PC-9 (cell line): ENCODE measurements at regions of chr11 and their contacts with region 1.

Region 1: GRCh38 chr11:18312663-18313420 is 9.1 kb downstream of the HPS5 start:
- DNase-seq: peak; percentile 85 to 99
- H3K4me3 ChIP-seq: peak overlapping the region; percentile 9; the same call in 1 of the 2 replicates
- H3K27ac ChIP-seq: peak overlapping the region; percentile 90
- H3K4me1 ChIP-seq: peaks cover 65% of the 10 kb centered on the region
- H3K27me3 ChIP-seq: no peaks in the 10 kb centered on the region
- CTCF ChIP-seq: no peak

Region 2: DNA sequence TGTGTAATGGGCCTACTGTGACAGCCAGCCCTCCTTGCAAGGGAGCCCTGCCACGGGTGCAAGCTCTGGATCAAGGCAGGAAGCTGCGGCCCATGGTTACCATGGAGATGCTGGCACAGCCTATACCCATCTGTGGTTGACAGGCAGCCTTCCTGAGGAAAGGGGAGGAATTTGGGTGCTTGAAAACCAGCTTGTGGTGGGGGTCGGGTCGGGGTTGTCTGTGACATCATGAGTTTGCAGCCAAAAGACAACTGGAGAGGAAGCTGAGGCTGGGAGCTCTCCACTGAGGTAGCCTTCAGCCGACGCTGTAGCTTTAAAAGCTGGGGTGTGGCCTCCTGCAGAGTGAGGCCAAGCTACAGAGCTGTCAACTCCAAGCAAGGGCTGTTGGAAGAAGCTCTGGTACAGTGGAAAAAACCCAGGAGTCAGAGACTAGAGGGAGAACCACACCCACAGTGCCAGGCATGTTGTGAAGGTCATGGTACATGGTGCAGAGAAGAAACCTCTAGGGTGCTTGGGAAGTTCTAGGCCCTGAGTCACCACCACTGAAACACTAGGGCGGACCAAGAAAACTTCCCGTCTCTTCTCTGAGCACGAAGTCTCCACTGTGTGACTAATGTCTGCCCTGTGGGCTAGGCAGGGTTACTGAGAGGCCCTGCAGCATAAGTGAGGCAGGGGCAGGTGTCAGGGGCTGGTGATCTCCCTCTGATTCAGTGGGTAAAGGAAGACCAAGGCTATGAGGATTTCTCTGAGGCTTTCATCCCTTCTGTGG is 70.7 kb after region 1 on chr11:
- CTCF ChIA-PET with region 1: no interaction called
- POLR2A ChIA-PET with region 1: interaction called, 4 read pairs
- intact Hi-C with region 1: loop called (anchors 1 kb)
- DNase-seq: peak; percentile 88 to 100
- H3K4me3 ChIP-seq: peak overlapping the region; percentile 30; the same call in 1 of the 2 replicates
- H3K27ac ChIP-seq: peak overlapping the region; percentile 97
- H3K4me1 ChIP-seq: peaks cover 45% of the 10 kb centered on the region
- H3K27me3 ChIP-seq: no peaks in the 10 kb centered on the region
- CTCF ChIP-seq: no peak

Region 3: GRCh38 chr11:18492888-18493287 is 180.0 kb after region 1 on chr11:
- CTCF ChIA-PET with region 1: no interaction called
- POLR2A ChIA-PET with region 1: no interaction called
- intact Hi-C with region 1: loop called (anchors 1 kb)
- DNase-seq: peak in 1 of 2 experiments; percentile 52
- H3K4me3 ChIP-seq: no peak overlapping the region
- H3K27ac ChIP-seq: peak overlapping the region; percentile 19
- H3K4me1 ChIP-seq: peaks cover 54% of the 10 kb centered on the region
- H3K27me3 ChIP-seq: no peaks in the 10 kb centered on the region
- CTCF ChIP-seq: no peak

Region 4: DNA sequence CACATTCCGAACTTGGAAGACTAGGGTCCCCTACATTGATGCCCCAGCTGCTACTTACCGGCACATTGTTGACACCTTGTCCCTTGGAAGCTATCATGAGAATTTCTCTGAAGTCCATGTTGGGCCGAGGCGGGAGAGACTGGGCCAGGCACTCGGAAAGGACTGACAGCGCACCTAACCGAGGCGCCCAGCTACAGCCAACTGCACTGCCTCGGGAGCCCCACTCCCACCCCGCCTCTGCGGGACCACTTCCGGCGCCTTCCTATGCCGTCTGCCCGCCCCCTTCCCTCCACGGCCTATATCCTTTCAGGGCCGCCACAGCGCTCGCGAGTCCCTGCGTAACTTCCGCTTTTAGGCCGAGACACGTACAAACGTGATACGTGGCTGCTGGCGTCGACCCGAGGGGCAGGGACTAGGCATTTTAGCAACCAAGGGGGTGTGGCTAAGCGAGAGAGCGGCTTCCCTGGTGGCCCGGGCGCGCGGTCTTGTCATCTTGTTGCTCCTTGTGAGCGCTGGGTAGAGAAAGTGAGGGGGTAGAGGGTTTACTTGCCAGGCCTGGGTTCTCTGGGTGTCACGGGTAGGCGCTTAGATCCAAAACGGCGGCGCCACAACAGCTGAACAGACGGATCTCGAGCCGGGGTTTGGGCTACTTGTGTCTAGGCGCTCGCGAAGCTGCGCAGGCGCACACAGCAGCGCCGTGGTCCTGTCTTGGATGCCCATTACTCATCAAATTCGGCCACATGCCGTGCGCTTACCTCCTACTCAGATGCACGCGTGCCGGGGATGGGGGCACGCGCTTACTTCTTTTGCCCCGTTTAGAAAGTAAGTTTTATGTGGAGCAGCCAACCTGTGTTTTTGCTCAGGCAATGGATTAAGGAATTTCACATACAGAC is 321.5 kb after region 1 on chr11 and contains the start of gene SPTY2D1:
- CTCF ChIA-PET with region 1: no interaction called
- POLR2A ChIA-PET with region 1: interaction called, 12 read pairs
- intact Hi-C with region 1: no loop called
- DNase-seq: peak; percentile 98
- H3K4me3 ChIP-seq: peak within 1 kb of the TSS; percentile 95
- H3K27ac ChIP-seq: peak within 1 kb of the TSS; percentile 83
- H3K4me1 ChIP-seq: peaks cover 15% of the 10 kb centered on the region
- H3K27me3 ChIP-seq: no peaks in the 10 kb centered on the region
- CTCF ChIP-seq: no peak
- total RNA-seq, gene SPTY2D1: 22.3 and 23.7 TPM in 2 replicates